CD4-positive, alpha-beta memory T cell (primary cell): ENCODE measurements at regions of chr16 and their contacts with region 1.

Region 1: GRCh38 chr16:65671-66137 is 6.7 kb downstream of the RHBDF1 start:
- DNase-seq: peak; percentile 75 to 81 (median 77)
- H3K4me3 ChIP-seq: no peak overlapping the region
- H3K4me3 Mint-ChIP-seq: no peak overlapping the region
- H3K27ac ChIP-seq: no peak overlapping the region
- H3K27ac Mint-ChIP-seq: no peak overlapping the region
- H3K4me1 ChIP-seq: no peaks in the 10 kb centered on the region
- H3K4me1 Mint-ChIP-seq: peaks cover 0 to 6% (median 3%) of the 10 kb centered on the region in 4 donors
- H3K27me3 ChIP-seq: no peaks in the 10 kb centered on the region
- H3K27me3 Mint-ChIP-seq: peaks cover 2 to 6% of the 10 kb centered on the region in 2 donors

Region 2: DNA sequence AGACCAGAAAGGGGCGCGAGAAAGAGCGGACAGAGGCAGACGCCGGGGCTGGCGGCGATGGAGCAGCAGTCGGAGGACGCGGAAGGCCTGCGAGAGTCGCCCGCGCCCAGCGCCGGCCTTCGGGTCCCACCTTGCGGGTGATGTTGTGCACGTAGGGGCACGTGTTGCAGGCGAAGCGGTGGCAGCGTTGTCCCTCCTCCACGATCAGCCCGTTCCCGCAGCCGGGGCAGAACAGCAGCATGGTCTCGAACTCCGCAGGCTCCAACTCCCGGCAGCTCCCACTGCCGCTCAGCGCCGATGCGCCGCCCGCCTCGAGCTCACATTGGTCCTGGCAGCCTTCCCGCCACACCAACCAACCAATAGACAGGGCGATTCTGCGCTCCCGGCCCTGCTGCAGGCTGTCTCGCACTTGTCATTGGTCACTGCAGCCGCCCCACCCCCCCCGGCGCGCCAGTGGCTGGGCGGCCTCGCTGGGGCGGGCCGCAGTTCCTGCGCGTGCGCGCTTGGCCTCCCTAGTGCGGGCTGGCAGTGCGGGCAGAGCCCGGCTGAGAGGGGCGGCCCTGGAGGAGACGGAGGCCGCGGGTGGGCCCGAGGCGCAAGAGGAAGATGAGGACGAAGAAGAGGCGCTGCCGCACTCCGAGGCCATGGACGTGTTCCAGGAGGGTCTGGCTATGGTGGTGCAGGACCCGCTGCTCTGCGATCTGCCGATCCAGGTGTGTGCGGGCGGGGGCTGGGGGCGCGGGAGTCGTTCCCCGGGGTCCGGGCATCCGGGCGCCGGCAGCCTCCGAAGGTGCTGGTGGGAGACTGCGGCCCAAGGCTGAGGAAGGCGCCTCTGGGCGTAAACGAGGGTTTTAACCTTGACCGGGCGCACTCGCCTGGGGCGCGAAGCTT is 12.1 kb before region 1 on chr16 and contains the starts of genes POLR3K and SNRNP25:
- CTCF ChIA-PET with region 1: interaction called, 10 read pairs
- POLR2A ChIA-PET with region 1: no interaction called
- intact Hi-C with region 1: no loop called
- DNase-seq: peak; percentile 96 to 98 (median 97)
- H3K4me3 ChIP-seq: peak within 1 kb of the TSS; percentile 79 to 84
- H3K4me3 Mint-ChIP-seq: peak within 1 kb of the TSS; percentile 90 to 99 (median 97)
- H3K27ac ChIP-seq: peak within 1 kb of the TSS; percentile 60
- H3K27ac Mint-ChIP-seq: peak within 1 kb of the TSS; percentile 84 to 96 (median 94)
- H3K4me1 ChIP-seq: peaks cover 29% of the 10 kb centered on the region
- H3K4me1 Mint-ChIP-seq: peaks cover 16 to 40% (median 24%) of the 10 kb centered on the region in 4 donors
- H3K27me3 ChIP-seq: no peaks in the 10 kb centered on the region
- H3K27me3 Mint-ChIP-seq: no peaks in the 10 kb centered on the region
- total RNA-seq, gene POLR3K: 19.9 to 21.7 TPM
- total RNA-seq, gene SNRNP25: 10.0 to 10.2 TPM

Region 3: GRCh38 chr16:91484-91883 is 25.8 kb after region 1 on chr16:
- CTCF ChIA-PET with region 1: interaction called, 165 read pairs
- POLR2A ChIA-PET with region 1: interaction called, 8 read pairs
- intact Hi-C with region 1: no loop called
- DNase-seq: no peak
- H3K4me3 ChIP-seq: no peak overlapping the region
- H3K4me3 Mint-ChIP-seq: no peak overlapping the region
- H3K27ac ChIP-seq: no peak overlapping the region
- H3K27ac Mint-ChIP-seq: no peak overlapping the region
- H3K4me1 ChIP-seq: no peaks in the 10 kb centered on the region
- H3K4me1 Mint-ChIP-seq: no peaks in the 10 kb centered on the region
- H3K27me3 ChIP-seq: no peaks in the 10 kb centered on the region
- H3K27me3 Mint-ChIP-seq: no peaks in the 10 kb centered on the region

Region 4: GRCh38 chr16:106623-107324 is 41.1 kb after region 1 on chr16:
- CTCF ChIA-PET with region 1: interaction called, 10 read pairs
- POLR2A ChIA-PET with region 1: no interaction called
- intact Hi-C with region 1: no loop called
- DNase-seq: peak in 4 of 5 donors; percentile 61 to 70 (median 66)
- H3K4me3 ChIP-seq: no peak overlapping the region
- H3K4me3 Mint-ChIP-seq: no peak overlapping the region
- H3K27ac ChIP-seq: no peak overlapping the region
- H3K27ac Mint-ChIP-seq: peak overlapping the region in 2 of 7 donors; percentile 11 to 29
- H3K4me1 ChIP-seq: peaks cover 4% of the 10 kb centered on the region
- H3K4me1 Mint-ChIP-seq: peaks cover 1 to 6% (median 4%) of the 10 kb centered on the region in 4 donors
- H3K27me3 ChIP-seq: no peaks in the 10 kb centered on the region
- H3K27me3 Mint-ChIP-seq: no peaks in the 10 kb centered on the region

Region 5: GRCh38 chr16:361872-362701 is 296.4 kb after region 1 on chr16:
- CTCF ChIA-PET with region 1: interaction called, 8 read pairs
- POLR2A ChIA-PET with region 1: no interaction called
- intact Hi-C with region 1: loop called (anchors 1 kb)
- DNase-seq: peak; percentile 70 to 75 (median 71)
- H3K4me3 ChIP-seq: no peak overlapping the region
- H3K4me3 Mint-ChIP-seq: peak overlapping the region in 6 of 8 donors; percentile 43 to 78 (median 55)
- H3K27ac ChIP-seq: no peak overlapping the region
- H3K27ac Mint-ChIP-seq: peak overlapping the region in 4 of 7 donors; percentile 72 to 80 (median 77)
- H3K4me1 ChIP-seq: peaks cover 8% of the 10 kb centered on the region
- H3K4me1 Mint-ChIP-seq: peaks cover 2 to 9% (median 5%) of the 10 kb centered on the region in 4 donors
- H3K27me3 ChIP-seq: no peaks in the 10 kb centered on the region
- H3K27me3 Mint-ChIP-seq: no peaks in the 10 kb centered on the region